ENCODE measurements at regions of chr5 and their contacts with region 1.

Region 1: DNA sequence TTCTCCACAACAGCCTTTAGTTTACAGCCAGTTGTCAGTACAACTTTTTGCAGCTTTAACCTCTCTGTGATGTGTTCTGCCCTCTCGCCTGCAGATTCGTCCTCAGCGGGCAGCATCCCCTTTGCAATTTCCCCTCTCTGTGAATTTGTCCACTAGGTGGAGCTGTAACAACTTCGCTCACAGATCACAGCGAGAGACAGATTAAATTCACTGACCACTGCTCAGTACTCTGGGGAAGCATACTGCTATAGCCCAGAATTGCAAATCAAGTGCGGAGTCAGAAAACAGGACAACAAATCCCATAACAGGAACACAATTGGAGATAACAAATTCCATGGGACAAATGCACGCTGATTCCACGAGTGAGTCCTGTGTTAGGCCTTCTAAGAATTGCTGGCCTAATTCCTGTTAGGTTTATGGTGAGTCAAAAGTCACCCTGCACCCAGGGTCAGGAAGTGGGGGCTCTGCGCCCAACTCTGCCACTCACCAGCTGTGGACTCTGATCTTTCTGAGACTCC is 2124.9 kb downstream of the MAT2B start:
- DNase-seq: peak in 2 of 3 donors; percentile 12 to 40
- ATAC-seq: peak; percentile 87
- H3K4me3 ChIP-seq: no peak overlapping the region
- H3K27ac ChIP-seq: no peak overlapping the region
- H3K4me1 ChIP-seq: no peaks in the 10 kb centered on the region
- H3K27me3 ChIP-seq: no peaks in the 10 kb centered on the region

Region 2: DNA sequence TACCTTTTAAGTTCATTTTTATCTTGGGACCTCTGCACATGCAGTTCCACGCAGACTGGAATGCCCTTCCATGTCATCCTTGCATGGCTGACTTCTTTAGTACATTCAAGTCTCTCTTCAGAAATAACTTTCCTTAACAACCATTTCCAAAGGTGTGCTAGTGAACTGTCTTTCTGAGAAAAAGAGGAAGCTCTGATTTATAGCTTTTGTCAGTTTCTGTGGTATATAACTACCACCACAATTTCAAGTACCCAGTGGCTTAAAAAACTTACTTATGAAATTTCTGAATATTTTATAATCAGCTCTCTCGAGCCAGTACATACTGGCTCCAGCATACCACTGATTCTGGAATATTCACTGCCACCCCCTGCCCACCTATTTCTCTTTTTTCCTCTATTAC is 511.1 kb before region 1 on chr5:
- intact Hi-C with region 1: no loop called
- DNase-seq: no peak
- ATAC-seq: no peak
- H3K4me3 ChIP-seq: no peak overlapping the region
- H3K27ac ChIP-seq: no peak overlapping the region
- H3K4me1 ChIP-seq: no peaks in the 10 kb centered on the region
- H3K27me3 ChIP-seq: no peaks in the 10 kb centered on the region

Region 3: GRCh38 chr5:165723931-165724330 is 93.6 kb after region 1 on chr5:
- intact Hi-C with region 1: no loop called
- DNase-seq: no peak
- ATAC-seq: no peak
- H3K4me3 ChIP-seq: no peak overlapping the region
- H3K27ac ChIP-seq: no peak overlapping the region
- H3K4me1 ChIP-seq: no peaks in the 10 kb centered on the region
- H3K27me3 ChIP-seq: no peaks in the 10 kb centered on the region

Region 4: DNA sequence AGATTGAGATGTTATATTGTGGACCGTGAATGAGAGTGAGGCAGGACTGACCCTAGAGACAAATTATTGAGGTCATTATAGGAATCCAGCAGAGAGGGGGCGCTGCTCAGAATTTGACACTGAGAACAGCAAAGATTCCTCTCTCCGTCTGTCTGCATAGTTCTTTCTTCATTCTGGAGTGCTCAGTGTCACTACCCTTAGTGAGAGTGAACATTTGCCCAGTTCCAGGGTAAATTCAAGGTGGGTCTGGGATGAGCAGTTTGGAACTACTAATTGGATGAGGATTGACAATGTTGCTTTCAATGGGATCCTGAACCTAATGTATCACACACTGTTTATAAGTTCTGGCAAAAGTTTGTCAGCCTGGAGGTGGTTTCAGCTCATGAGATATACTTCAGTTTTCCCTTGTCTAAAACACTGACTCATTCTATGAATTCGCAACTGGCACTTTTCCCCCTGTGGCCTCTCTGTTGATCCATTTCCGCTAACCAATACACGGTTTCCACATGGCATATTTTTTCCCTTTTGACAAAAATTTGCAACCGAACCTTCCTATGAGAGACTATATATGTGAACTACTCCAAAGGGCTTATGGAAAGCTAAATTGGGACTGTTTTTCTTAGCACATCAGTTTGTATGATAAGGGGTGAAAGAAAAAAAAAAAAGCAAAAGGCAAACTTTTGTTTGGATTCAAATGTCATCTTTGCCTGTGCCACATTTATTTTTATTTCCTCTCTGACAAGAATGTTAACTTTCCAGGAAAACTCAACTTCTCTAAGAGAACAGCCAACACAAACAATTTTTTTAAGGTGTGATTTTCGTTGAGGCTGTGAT is 1420.5 kb after region 1 on chr5:
- intact Hi-C with region 1: loop called in 1 of 4 experiments (anchors 10 kb)
- DNase-seq: no peak
- ATAC-seq: peak; percentile 33 to 68
- H3K4me3 ChIP-seq: no peak overlapping the region
- H3K27ac ChIP-seq: no peak overlapping the region
- H3K4me1 ChIP-seq: no peaks in the 10 kb centered on the region
- H3K27me3 ChIP-seq: no peaks in the 10 kb centered on the region

Measured in right cardiac atrium (tissue), 5 donors.